ENCODE measurements at regions of chr2 and their contacts with region 1.

Region 1: DNA sequence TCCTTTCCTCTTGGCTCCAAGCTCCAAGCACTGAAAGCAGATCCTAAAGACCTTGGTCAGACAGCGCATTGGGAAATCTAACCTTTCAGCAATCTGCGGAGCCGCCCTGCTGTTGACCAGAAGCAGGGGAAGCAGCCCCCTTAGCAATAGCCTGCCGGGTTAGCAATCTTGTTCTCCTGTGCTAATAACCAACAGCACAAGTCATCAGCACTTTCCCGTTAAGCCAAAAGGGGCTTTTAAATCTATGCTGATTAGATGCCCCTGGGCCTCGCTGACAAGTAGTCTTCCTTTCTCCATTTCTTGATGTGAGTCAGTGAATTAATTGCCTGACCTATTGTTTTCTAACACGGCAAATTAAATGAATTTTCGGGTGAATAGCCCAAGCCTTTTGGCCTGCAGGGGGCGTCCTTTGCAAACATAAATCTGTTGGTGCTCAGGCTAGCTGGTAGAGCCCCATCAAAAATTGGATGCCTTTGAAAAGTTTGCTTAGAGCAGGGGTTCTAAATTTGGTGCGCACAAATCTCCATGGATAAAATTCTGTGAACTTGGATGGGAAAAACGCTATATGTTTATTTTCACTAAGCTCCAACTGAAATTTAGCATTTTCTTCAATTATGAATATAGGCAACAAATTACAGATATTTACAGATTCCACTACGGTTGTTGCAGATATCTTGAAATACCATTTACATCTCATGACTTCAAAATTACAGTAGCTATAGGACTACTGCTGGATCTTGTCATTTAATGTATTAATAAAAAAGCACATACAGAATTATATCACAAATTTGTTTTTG is 24.6 kb downstream of the MAIP1 start:
- DNase-seq: peak; percentile 77
- ATAC-seq: peak; percentile 73
- H3K4me3 ChIP-seq: no peak overlapping the region
- H3K27ac ChIP-seq: peak overlapping the region; percentile 30
- H3K4me1 ChIP-seq: peaks cover 9% of the 10 kb centered on the region
- H3K27me3 ChIP-seq: no peaks in the 10 kb centered on the region
- CTCF ChIP-seq: peak; percentile 91
- POLR2A ChIP-seq: no peak
- RAD21 ChIP-seq: peak; percentile 87

Region 2: DNA sequence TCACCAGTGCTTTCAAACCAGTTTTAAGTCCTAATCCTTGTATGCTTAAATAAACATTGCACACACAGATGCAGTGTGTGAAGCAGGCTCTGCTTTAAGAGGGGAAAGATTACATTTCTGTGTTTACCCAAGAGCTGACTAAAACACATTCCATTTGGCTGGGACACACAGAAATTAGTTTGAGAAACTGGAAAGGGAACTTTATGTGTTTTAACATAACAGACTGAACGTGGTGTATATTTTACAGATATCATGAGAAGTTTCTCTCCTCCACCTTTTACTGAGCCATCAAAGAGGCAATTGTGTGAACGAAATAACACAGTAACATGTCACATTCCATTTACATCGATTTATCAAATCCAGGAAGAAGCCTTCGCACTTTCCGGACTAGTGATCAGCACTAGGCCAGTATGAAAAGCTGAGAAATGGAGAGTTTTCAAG is 97.2 kb after region 1 on chr2:
- CTCF ChIA-PET with region 1: no interaction called
- POLR2A ChIA-PET with region 1: no interaction called
- dilution Hi-C with region 1: no loop called
- in situ Hi-C with region 1: no loop called
- intact Hi-C with region 1: loop called (anchors 2 kb)
- DNase-seq: peak; percentile 95
- ATAC-seq: peak; percentile 96
- H3K4me3 ChIP-seq: no peak overlapping the region
- H3K27ac ChIP-seq: peak overlapping the region; percentile 36; the same call in 1 of the 2 replicates
- H3K4me1 ChIP-seq: peaks cover 8% of the 10 kb centered on the region
- H3K27me3 ChIP-seq: no peaks in the 10 kb centered on the region; the same call in 1 of the 2 replicates
- CTCF ChIP-seq: no peak
- POLR2A ChIP-seq: no peak
- RAD21 ChIP-seq: no peak

Region 3: GRCh38 chr2:200138391-200139124 is 158.5 kb after region 1 on chr2:
- CTCF ChIA-PET with region 1: no interaction called
- POLR2A ChIA-PET with region 1: no interaction called
- dilution Hi-C with region 1: no loop called
- in situ Hi-C with region 1: no loop called
- intact Hi-C with region 1: no loop called
- DNase-seq: peak; percentile 59
- ATAC-seq: peak; percentile 21; the same call in 1 of the 2 replicates
- H3K4me3 ChIP-seq: no peak overlapping the region
- H3K27ac ChIP-seq: no peak overlapping the region
- H3K4me1 ChIP-seq: no peaks in the 10 kb centered on the region
- H3K27me3 ChIP-seq: no peaks in the 10 kb centered on the region
- CTCF ChIP-seq: no peak
- POLR2A ChIP-seq: no peak
- RAD21 ChIP-seq: no peak

Region 4: GRCh38 chr2:200252265-200253067 is 272.4 kb after region 1 on chr2:
- CTCF ChIA-PET with region 1: no interaction called
- POLR2A ChIA-PET with region 1: no interaction called
- dilution Hi-C with region 1: no loop called
- in situ Hi-C with region 1: no loop called
- intact Hi-C with region 1: loop called (anchors 5 kb)
- DNase-seq: peak; percentile 93
- ATAC-seq: peak; percentile 81
- H3K4me3 ChIP-seq: no peak overlapping the region
- H3K27ac ChIP-seq: peak overlapping the region; percentile 87
- H3K4me1 ChIP-seq: peaks cover 20% of the 10 kb centered on the region
- H3K27me3 ChIP-seq: no peaks in the 10 kb centered on the region
- CTCF ChIP-seq: no peak
- POLR2A ChIP-seq: no peak
- RAD21 ChIP-seq: no peak; the same call in 1 of the 2 replicates

Region 5: DNA sequence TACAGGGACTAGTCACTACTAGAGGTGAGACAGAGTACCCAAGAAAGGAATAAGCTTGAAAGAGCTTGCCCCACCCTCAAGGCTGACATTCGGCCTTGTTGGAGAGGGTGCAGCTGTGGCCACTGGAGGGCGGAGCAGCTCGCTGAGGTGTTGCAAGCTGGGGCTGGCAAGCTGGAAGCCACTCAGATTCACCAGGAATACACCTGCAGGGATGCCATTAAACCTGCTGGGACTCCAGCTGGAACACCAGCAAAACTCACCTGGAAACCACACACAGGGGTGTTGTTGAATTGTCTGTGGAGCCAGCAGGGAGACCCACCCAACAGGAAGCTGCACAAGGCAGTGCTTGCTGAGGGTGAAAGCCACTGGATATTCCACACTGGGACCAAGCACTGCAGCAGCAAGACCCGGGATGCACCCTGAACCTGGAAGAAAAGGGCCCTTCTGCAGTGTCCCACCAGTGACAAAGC is 503.7 kb after region 1 on chr2:
- CTCF ChIA-PET with region 1: interaction called, 5 read pairs
- POLR2A ChIA-PET with region 1: no interaction called
- dilution Hi-C with region 1: no loop called
- in situ Hi-C with region 1: loop called (anchors 5 kb)
- intact Hi-C with region 1: loop called (anchors 1 kb)
- DNase-seq: peak; percentile 25
- ATAC-seq: no peak
- H3K4me3 ChIP-seq: no peak overlapping the region
- H3K27ac ChIP-seq: no peak overlapping the region
- H3K4me1 ChIP-seq: peaks cover 19% of the 10 kb centered on the region
- H3K27me3 ChIP-seq: no peaks in the 10 kb centered on the region
- CTCF ChIP-seq: peak; percentile 25; the same call in 1 of the 2 replicates
- POLR2A ChIP-seq: no peak
- RAD21 ChIP-seq: no peak

Region 6: DNA sequence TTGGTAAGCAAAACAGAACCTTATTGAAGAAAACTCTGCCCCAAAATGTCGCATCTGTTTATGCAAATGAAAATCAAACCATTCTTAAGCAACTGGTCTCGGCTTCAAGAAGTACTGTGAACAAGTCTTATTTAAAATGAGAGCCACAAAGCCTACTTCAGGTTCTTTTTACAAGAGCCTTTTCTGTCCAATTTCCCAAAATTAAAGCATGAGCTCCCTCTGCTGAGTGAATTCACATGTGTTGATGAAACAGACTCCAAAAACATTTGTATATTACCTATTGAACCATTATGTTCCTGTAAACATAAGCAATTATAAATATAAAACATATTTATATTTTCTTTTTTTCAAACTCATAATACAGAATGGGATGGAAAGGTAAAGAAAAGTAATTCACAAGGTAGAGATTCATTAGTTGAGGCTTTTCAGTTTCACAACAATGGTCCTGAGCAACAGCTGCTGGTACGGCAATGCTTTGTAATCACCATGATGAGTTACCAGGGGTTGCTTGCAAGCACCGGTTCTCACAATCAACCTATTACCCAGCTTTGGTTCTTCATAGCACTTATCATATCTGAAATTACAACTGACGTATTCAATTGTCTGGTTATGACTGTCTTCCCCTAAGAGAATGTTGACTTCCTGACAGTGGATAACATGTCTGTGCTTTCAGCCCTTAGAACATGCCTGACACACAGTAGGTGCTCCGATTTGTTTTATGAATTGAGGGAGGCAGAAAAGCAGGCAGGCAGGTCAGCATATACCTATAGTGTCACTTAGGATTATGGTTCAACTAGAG is 723.3 kb after region 1 on chr2:
- CTCF ChIA-PET with region 1: no interaction called
- POLR2A ChIA-PET with region 1: interaction called, 5 read pairs
- dilution Hi-C with region 1: no loop called
- in situ Hi-C with region 1: loop called (anchors 10 kb)
- intact Hi-C with region 1: no loop called
- DNase-seq: peak; percentile 80
- ATAC-seq: peak; percentile 73
- H3K4me3 ChIP-seq: no peak overlapping the region
- H3K27ac ChIP-seq: no peak overlapping the region
- H3K4me1 ChIP-seq: no peaks in the 10 kb centered on the region
- H3K27me3 ChIP-seq: peaks cover 7% of the 10 kb centered on the region
- CTCF ChIP-seq: peak; percentile 88
- POLR2A ChIP-seq: no peak
- RAD21 ChIP-seq: peak; percentile 91